Activated naive CD4-positive, alpha-beta T cell treated with anti-CD3 and anti-CD28 coated beads for 36 hours (primary cell): ENCODE measurements at regions of chr2 and their contacts with region 1.

Region 1: DNA sequence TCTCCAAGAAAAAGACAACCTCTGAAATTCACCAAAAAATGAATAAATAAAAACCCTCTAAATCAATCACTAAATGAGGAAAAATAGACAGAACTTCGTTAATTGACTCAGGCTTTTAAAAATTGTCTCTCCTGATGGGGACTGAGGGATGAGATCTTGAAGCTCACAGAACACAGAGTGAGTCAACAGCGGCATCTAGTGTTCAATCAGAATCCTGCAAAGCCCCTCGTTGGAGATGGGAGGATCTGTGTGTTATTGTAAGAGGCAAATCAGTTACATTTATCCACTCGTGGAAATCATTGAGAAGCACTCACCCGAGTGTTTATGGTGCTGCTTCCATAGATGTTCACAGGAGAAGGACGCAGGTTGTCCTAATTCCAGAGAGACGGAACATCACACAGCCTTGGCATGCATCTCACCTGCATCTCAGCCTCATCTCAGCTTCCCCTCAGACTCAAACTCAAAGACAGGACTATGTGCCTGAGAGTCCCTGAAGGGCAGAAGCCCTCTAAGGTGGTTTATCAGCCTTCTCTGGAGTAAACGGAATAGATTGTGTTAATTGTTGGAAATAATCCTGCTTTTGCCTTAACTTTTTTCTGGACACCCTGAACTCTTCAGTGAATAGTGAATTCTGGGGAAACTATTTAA is 82.0 kb downstream of the MREG start:
- DNase-seq: peak; percentile 78
- H3K4me3 Mint-ChIP-seq: no peak overlapping the region
- H3K27ac Mint-ChIP-seq: no peak overlapping the region
- H3K4me1 Mint-ChIP-seq: peaks cover 8% of the 10 kb centered on the region
- H3K27me3 Mint-ChIP-seq: no peaks in the 10 kb centered on the region

Region 2: GRCh38 chr2:215269397-215270119 is 661.8 kb before region 1 on chr2:
- CTCF ChIA-PET with region 1: interaction called, 3 read pairs
- intact Hi-C with region 1: loop called (anchors 5 kb)
- DNase-seq: peak; percentile 69
- H3K4me3 Mint-ChIP-seq: no peak overlapping the region
- H3K27ac Mint-ChIP-seq: no peak overlapping the region
- H3K4me1 Mint-ChIP-seq: peaks cover 3% of the 10 kb centered on the region
- H3K27me3 Mint-ChIP-seq: no peaks in the 10 kb centered on the region

Region 3: GRCh38 chr2:215454519-215455246 is 476.7 kb before region 1 on chr2:
- CTCF ChIA-PET with region 1: interaction called, 4 read pairs
- intact Hi-C with region 1: loop called (anchors 1 kb)
- DNase-seq: no peak
- H3K4me3 Mint-ChIP-seq: no peak overlapping the region
- H3K27ac Mint-ChIP-seq: no peak overlapping the region
- H3K4me1 Mint-ChIP-seq: no peaks in the 10 kb centered on the region
- H3K27me3 Mint-ChIP-seq: peaks cover 8% of the 10 kb centered on the region

Region 4: DNA sequence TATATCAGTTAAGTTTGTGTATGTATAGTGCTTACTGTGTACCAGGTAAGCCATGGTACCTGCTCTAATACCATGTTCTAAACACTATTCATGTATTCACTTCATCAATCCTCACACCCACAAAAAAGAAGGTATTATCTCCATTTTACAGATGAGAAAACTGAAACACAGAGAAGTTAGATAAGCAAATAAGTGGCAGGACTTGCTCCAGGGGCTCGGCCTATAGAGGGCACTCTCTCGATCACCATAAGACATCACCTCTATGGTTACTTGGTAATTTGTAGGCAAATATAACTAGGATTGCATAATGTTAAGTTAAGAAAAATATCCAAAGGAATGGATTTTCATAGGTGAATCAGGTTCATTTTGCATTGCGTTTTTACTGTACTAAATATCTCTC is 377.4 kb before region 1 on chr2:
- CTCF ChIA-PET with region 1: no interaction called
- intact Hi-C with region 1: loop called (anchors 10 kb)
- DNase-seq: peak; percentile 19
- H3K4me3 Mint-ChIP-seq: no peak overlapping the region
- H3K27ac Mint-ChIP-seq: no peak overlapping the region
- H3K4me1 Mint-ChIP-seq: no peaks in the 10 kb centered on the region
- H3K27me3 Mint-ChIP-seq: no peaks in the 10 kb centered on the region